Breast epithelium (tissue), 4 donors: ENCODE measurements at regions of chr2 and their contacts with region 1.

Region 1: GRCh38 chr2:124395961-124396360 is 370.9 kb downstream of the CNTNAP5 start:
- DNase-seq: no peak
- H3K4me3 ChIP-seq: no peak overlapping the region
- H3K27ac ChIP-seq: no peak overlapping the region
- H3K4me1 ChIP-seq: no peaks in the 10 kb centered on the region
- H3K27me3 ChIP-seq: no peaks in the 10 kb centered on the region
- CTCF ChIP-seq: no peak
- POLR2A ChIP-seq: no peak

Region 2: DNA sequence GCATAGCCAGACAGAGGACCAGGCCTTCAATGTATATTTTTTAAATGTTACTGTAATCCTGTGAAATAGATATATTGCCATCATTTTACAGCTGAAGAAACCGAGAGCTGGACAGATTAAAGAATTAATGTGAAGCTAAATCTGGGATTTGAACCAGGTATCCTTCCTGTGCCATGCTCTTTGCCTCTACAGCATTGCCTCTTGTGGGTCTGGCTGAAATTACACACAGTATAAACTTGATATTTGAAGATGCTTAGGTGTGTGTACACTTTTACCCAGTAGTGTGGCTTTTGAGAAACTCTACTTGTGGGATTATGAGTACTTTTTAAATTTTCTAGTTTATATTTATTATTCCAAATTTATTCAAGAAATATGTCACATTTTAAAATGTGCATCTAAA is 106.3 kb before region 1 on chr2:
- intact Hi-C with region 1: loop called (anchors 5 kb)
- DNase-seq: no peak
- H3K4me3 ChIP-seq: no peak overlapping the region
- H3K27ac ChIP-seq: no peak overlapping the region
- H3K4me1 ChIP-seq: no peaks in the 10 kb centered on the region
- H3K27me3 ChIP-seq: no peaks in the 10 kb centered on the region
- CTCF ChIP-seq: no peak
- POLR2A ChIP-seq: no peak